IMR-90 (cell line): ENCODE measurements at regions of chr3 and their contacts with region 1.

Region 1: GRCh38 chr3:58532794-58533220 is 4.2 kb downstream of the ACOX2 start:
- DNase-seq: peak; percentile 65
- ATAC-seq: peak; percentile 81
- H3K4me3 ChIP-seq: no peak overlapping the region
- H3K27ac ChIP-seq: no peak overlapping the region
- H3K4me1 ChIP-seq: peaks cover 18% of the 10 kb centered on the region
- H3K27me3 ChIP-seq: no peaks in the 10 kb centered on the region
- CTCF ChIP-seq: peak; percentile 95
- POLR2A ChIP-seq: no peak
- RAD21 ChIP-seq: peak; percentile 92

Region 2: GRCh38 chr3:58305882-58306711 is 226.7 kb before region 1 on chr3 and contains the starts of genes HTD2 and RPP14:
- CTCF ChIA-PET with region 1: interaction called, 3 read pairs
- POLR2A ChIA-PET with region 1: no interaction called
- dilution Hi-C with region 1: no loop called
- in situ Hi-C with region 1: no loop called
- intact Hi-C with region 1: loop called (anchors 1 kb)
- DNase-seq: peak; percentile 97
- ATAC-seq: peak; percentile 92
- H3K4me3 ChIP-seq: peak within 1 kb of the TSS; percentile 74
- H3K27ac ChIP-seq: peak within 1 kb of the TSS; percentile 94
- H3K4me1 ChIP-seq: peaks cover 6% of the 10 kb centered on the region
- H3K27me3 ChIP-seq: peaks cover 9% of the 10 kb centered on the region
- CTCF ChIP-seq: peak; percentile 98
- POLR2A ChIP-seq: peak; percentile 92
- RAD21 ChIP-seq: peak; percentile 42
- total RNA-seq, gene HTD2: 11.4 and 13.3 TPM in 2 replicates
- total RNA-seq, gene RPP14: 6.6 and 11.9 TPM in 2 replicates

Region 3: DNA sequence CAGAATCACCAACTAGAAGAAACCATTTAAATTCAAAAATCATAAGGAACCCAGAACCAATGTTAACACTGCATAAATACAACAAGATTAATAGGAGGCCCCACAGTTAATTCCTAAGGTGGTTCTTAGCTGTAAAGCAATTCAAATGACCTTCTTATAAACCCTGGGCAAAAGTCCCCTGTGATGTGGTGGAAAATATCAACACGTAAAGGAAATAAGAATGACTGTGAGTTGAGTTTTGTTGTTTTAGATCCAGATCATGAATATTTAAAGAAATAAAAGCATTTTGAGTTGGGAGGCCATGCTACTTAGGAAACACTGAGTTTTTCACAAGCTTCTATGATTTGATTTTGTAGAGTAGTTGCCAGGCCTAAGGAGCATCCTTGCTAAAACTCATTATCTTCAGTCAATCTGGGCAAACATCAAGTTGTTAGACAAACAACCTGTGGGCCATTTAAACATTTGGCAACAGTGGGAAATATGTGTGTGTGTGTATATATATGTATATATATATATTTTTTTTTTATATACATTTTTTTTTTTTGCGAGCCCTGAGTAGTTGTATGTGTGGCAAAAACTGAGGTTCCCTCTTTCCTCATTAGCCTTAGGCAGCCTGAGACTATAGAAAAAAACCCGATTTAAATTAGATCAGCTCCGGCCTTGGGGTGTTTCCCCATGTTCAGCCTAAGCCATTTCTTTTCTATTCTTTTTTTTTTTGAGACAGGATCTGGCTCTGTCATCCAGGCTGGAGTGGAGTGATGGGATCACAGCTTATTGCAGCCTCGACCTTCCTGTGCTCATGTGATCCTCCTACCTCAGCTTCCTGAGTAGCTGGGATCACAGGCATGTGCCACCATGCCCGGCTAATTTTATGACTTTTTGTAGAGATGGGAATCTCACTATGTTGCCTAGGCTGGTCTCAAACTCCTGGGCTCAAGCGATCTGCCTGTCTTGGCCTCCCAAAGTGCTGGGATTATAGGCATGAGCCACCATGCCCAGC is 208.1 kb before region 1 on chr3:
- CTCF ChIA-PET with region 1: no interaction called
- POLR2A ChIA-PET with region 1: interaction called, 3 read pairs
- dilution Hi-C with region 1: no loop called
- in situ Hi-C with region 1: loop called (anchors 5 kb)
- intact Hi-C with region 1: loop called (anchors 2 kb)
- DNase-seq: peak; percentile 10
- ATAC-seq: peak; percentile 13
- H3K4me3 ChIP-seq: no peak overlapping the region
- H3K27ac ChIP-seq: peak overlapping the region; percentile 34; the same call in 1 of the 2 replicates
- H3K4me1 ChIP-seq: peaks cover 13% of the 10 kb centered on the region
- H3K27me3 ChIP-seq: no peaks in the 10 kb centered on the region
- CTCF ChIP-seq: no peak
- POLR2A ChIP-seq: no peak
- RAD21 ChIP-seq: no peak

Region 4: DNA sequence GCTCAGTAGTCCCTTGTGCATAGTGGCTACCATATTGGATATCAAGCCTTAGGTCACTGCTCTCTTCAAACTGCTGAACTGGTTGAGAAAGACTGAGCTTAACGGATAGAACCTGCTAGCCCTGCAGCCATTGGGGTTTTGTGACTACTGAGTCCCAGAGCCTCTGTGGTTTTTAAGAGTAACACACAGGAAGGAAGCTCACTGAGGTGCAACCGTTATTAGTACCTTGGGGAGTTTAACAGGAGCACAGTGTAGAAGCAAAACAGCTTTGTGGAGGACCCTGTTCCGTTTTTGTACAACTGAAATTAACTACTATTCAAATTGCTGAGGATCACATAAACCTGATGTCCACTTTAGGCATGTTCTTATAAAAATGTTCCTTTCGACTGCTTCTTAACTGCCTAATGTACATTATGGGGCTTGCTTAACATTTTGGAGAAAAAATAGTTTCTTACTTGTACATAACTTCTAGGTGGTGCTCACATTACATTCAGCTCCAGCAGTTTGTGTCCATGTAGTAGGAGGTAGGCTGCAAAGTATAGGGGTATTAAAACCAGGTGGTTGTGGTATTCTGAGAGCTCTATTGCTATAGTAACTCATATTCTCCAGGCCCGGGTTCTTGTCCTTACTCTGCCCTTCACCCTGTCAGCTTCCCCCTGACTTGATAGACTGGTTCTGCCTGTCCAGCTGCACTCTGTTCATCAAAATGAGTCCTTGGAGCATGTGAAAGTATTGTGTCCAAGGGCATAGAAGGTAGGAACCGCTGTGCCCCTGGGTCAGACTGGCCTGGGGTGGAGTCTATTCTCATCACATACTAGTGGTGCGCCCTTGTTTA is 182.8 kb before region 1 on chr3:
- CTCF ChIA-PET with region 1: no interaction called
- POLR2A ChIA-PET with region 1: no interaction called
- dilution Hi-C with region 1: no loop called
- in situ Hi-C with region 1: no loop called
- intact Hi-C with region 1: no loop called
- DNase-seq: no peak
- ATAC-seq: peak; percentile 7; the same call in 1 of the 2 replicates
- H3K4me3 ChIP-seq: no peak overlapping the region
- H3K27ac ChIP-seq: peak overlapping the region; percentile 4; the same call in 1 of the 2 replicates
- H3K4me1 ChIP-seq: peaks cover 11% of the 10 kb centered on the region
- H3K27me3 ChIP-seq: no peaks in the 10 kb centered on the region
- CTCF ChIP-seq: no peak
- POLR2A ChIP-seq: no peak
- RAD21 ChIP-seq: no peak

Region 5: GRCh38 chr3:58433400-58434169 is 99.2 kb before region 1 on chr3 and contains the start of gene PDHB:
- CTCF ChIA-PET with region 1: interaction called, 4 read pairs
- POLR2A ChIA-PET with region 1: no interaction called
- dilution Hi-C with region 1: no loop called
- in situ Hi-C with region 1: no loop called
- intact Hi-C with region 1: loop called (anchors 2 kb)
- DNase-seq: peak; percentile 86
- ATAC-seq: peak; percentile 91
- H3K4me3 ChIP-seq: peak within 1 kb of the TSS; percentile 92
- H3K27ac ChIP-seq: peak within 1 kb of the TSS; percentile 98
- H3K4me1 ChIP-seq: peaks cover 12% of the 10 kb centered on the region
- H3K27me3 ChIP-seq: no peaks in the 10 kb centered on the region
- CTCF ChIP-seq: no peak
- POLR2A ChIP-seq: peak; percentile 62; the same call in 1 of the 2 replicates
- RAD21 ChIP-seq: 0 out of 2 replicates have a peak, but pooled peaks have one; percentile 7
- total RNA-seq, gene PDHB: 73.5 and 86.9 TPM in 2 replicates

Region 6: DNA sequence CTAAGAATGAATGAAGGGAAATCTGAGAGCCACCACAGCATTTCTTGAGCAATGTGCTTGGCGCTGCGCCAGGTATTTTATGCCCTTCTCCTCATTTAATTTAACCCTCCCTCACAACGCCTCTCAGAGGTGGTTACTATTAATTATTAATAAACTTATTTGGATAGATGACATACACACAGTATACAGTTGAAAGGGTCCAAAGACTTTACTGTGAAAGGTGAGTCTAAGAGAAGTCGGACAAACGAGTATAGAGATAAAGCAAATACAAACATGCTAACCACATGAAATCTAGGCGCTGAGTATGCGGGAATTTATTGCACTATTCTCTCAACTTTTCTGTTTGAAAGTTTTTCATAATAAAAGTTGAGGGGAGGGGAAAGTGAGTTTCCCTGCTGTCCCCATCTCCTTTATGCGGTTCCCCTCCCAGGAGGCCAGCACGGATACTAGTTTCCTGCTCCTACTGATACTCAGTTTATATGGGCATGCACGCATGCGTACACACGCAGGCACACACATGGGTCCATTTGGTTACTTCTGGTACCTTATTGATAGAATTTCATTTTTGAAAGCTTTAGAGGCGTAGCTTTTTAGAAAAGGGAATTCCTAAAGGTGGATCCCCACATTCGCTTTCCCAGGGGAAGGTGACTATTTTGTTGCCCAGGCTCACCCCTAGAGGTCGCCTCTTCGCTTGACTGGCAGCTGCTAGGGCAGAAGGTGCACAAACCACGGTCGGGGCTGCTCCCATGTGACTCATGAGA is 69.4 kb before region 1 on chr3:
- CTCF ChIA-PET with region 1: no interaction called
- POLR2A ChIA-PET with region 1: no interaction called
- dilution Hi-C with region 1: no loop called
- in situ Hi-C with region 1: no loop called
- intact Hi-C with region 1: loop called (anchors 2 kb)
- DNase-seq: peak; percentile 85
- ATAC-seq: peak; percentile 95
- H3K4me3 ChIP-seq: no peak overlapping the region
- H3K27ac ChIP-seq: no peak overlapping the region
- H3K4me1 ChIP-seq: peaks cover 4% of the 10 kb centered on the region; the same call in 1 of the 2 replicates
- H3K27me3 ChIP-seq: no peaks in the 10 kb centered on the region
- CTCF ChIP-seq: peak; percentile 71
- POLR2A ChIP-seq: no peak
- RAD21 ChIP-seq: peak; percentile 62